ENCODE measurements at regions of chr12 and their contacts with region 1.

Region 1: GRCh38 chr12:54749191-54749818 is 101.1 kb upstream of the DCD start:
- DNase-seq: peak; percentile 31 to 61 (median 45)
- ATAC-seq: peak; percentile 75
- H3K4me3 ChIP-seq: no peak overlapping the region
- H3K27ac ChIP-seq: no peak overlapping the region
- H3K4me1 ChIP-seq: no peaks in the 10 kb centered on the region
- H3K27me3 ChIP-seq: no peaks in the 10 kb centered on the region
- CTCF ChIP-seq: peak; percentile 64 to 87 (median 74); a peak in 5 of 6 replicates
- EP300 ChIP-seq: no peak
- POLR2A ChIP-seq: no peak
- RAD21 ChIP-seq: peak; percentile 92 to 93

Region 2: DNA sequence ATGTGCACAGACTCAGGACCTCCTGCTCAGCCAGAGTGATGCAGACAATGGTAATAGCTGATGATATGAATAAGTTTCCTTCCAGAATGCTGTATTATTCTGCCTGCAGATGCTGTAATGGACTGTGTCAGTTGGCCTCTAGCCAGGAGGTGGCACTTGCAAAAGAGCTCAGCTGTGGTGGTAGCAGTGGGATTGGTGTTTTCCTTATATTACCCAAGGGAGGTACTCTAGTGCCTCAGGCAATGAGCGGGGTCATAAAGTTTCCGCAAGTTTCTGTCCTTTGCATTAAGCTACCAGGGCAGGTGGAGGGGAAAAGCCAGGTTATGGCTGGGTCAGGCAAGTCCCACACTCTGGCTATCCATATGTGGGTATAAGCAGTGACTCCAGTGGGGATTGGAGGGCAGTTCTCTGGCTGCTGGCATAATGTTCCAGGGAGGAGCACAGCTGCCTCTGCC is 91.0 kb after region 1 on chr12:
- CTCF ChIA-PET with region 1: no interaction called
- POLR2A ChIA-PET with region 1: no interaction called
- in situ Hi-C with region 1: no loop called
- intact Hi-C with region 1: loop called (anchors 5 kb)
- DNase-seq: no peak
- ATAC-seq: no peak
- H3K4me3 ChIP-seq: no peak overlapping the region
- H3K27ac ChIP-seq: no peak overlapping the region
- H3K4me1 ChIP-seq: no peaks in the 10 kb centered on the region
- H3K27me3 ChIP-seq: no peaks in the 10 kb centered on the region
- CTCF ChIP-seq: no peak
- EP300 ChIP-seq: no peak
- POLR2A ChIP-seq: no peak
- RAD21 ChIP-seq: no peak